Endothelial cell of umbilical vein (primary cell): ENCODE measurements at regions of chr3 and their contacts with region 1.

Region 1: DNA sequence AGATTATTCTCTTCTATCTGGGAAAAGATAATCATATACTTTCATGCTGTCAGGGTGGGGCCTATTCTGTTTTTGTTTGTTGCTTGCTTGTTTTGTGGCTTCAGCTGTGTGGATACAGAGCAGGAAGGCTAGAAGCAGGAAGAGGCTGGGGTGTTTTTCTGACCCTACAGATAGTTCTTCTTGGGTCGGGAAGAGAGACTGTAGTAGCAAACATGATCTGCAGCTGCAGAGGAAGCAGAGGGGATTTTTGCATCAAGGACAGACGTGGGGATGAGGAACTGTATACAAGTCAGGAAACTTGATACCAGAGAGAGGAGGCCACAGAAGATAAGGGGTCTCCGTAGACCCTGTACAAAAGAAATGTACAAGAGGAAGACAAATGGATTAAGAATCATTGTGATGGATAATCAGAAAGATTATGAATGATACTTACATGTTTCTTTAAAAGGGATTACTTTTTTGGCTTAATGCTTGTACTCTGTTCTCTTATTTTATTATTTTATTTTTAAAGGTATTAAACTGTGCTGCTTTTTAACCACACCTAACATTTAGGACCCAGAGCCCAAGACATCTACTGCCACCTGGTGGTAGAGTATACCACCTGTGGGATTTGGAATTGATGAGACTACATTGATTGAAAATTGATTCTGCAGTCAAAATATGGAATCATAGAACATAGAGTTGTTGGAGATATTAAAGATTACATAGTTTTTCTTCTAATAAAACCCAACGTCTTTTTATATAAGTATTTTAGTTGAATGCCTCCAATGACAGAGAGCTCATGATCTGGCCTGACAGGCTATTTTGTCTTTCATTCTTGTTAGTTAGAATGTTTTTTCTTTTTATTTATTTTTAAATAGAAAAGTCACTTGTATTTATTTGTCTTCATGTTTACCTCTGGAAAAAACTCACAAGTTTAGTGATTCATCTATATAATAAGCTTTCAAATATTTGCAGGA is 87.3 kb upstream of the ROPN1 start:
- DNase-seq: peak; percentile 34
- H3K4me3 ChIP-seq: no peak overlapping the region
- H3K27ac ChIP-seq: no peak overlapping the region
- H3K4me1 ChIP-seq: no peaks in the 10 kb centered on the region
- H3K27me3 ChIP-seq: peaks cover 0 to 4% of the 10 kb centered on the region in 2 experiments
- CTCF ChIP-seq: peak; percentile 29 to 58
- POLR2A ChIP-seq: no peak

Region 2: GRCh38 chr3:123941121-123941520 is 138.1 kb before region 1 on chr3:
- CTCF ChIA-PET with region 1: interaction called, 10 read pairs
- POLR2A ChIA-PET with region 1: no interaction called
- dilution Hi-C with region 1: no loop called
- intact Hi-C with region 1: no loop called
- DNase-seq: no peak
- H3K4me3 ChIP-seq: no peak overlapping the region
- H3K27ac ChIP-seq: no peak overlapping the region
- H3K4me1 ChIP-seq: no peaks in the 10 kb centered on the region
- H3K27me3 ChIP-seq: no peaks in the 10 kb centered on the region
- CTCF ChIP-seq: no peak
- POLR2A ChIP-seq: no peak

Region 3: DNA sequence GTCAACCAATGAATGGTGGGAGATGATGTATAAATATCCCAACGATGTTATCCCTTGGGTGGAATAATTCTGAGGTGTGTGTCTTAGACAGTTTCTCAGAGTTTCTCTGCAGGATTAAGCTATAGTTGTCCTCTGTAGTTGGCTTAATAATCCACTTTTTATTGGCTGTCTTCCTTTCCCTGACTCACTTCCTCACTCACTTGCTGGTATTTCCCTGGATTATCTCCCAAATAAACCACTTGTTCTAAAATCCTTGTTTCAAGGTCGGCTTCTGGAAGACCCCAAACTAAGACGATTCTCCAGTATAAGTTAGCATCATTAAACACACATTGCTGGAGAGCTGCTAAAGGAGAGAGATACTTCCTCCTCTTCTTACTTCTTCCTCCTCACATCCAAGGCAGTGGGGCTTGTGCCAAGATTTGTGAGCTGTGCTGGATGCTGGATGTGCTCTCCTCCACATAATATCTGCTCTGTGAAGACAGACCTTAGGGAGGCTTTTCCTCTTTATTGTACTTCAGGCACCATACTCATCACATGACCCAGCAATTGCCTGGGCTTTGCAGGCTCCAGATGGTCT is 64.8 kb before region 1 on chr3:
- CTCF ChIA-PET with region 1: interaction called, 48 read pairs
- POLR2A ChIA-PET with region 1: no interaction called
- dilution Hi-C with region 1: no loop called
- intact Hi-C with region 1: loop called (anchors 1 kb)
- DNase-seq: peak; percentile 23
- H3K4me3 ChIP-seq: no peak overlapping the region
- H3K27ac ChIP-seq: no peak overlapping the region
- H3K4me1 ChIP-seq: peaks cover 7% of the 10 kb centered on the region
- H3K27me3 ChIP-seq: peaks cover 0 to 5% of the 10 kb centered on the region in 2 experiments
- CTCF ChIP-seq: no peak
- POLR2A ChIP-seq: no peak

Region 4: DNA sequence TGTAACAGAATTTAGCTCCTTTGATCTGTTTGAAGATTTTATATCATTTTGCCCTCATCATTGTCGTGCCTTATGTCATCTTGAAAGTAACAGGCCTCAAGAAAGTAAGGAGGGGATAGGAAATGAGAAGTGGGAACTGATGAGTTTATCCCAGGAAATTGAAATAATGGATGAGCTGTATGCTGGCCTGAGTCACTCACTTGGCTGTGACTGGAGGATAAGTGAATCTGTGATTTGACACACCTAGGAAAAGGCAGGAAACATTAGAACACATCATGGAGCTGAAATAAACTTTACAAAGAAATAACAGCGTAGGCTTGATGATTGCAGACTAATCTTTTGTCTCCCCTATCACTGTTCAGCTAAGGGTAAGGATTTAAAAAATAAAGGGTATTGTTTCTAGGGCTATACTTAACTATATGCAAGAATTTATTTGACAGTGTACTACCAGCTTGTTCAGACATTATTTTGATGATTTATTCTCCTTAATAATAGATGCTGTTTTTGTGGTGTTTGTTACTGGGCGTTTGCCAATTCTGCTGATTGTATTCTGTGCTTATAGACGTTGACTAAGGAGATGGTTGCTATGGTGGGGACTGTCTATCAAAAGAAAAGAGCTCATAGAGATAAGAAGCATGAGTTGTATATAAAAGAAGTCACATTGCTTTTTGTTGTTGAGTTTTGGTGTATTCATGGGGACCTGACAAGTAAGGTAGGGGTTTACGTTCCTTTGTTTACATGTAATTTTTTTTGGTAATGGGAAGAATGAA is 18.3 kb after region 1 on chr3:
- CTCF ChIA-PET with region 1: interaction called, 14 read pairs
- POLR2A ChIA-PET with region 1: no interaction called
- dilution Hi-C with region 1: no loop called
- intact Hi-C with region 1: loop called (anchors 1 kb)
- DNase-seq: peak; percentile 34
- H3K4me3 ChIP-seq: no peak overlapping the region
- H3K27ac ChIP-seq: no peak overlapping the region
- H3K4me1 ChIP-seq: peaks cover 14% of the 10 kb centered on the region
- H3K27me3 ChIP-seq: no peaks in the 10 kb centered on the region
- CTCF ChIP-seq: no peak
- POLR2A ChIP-seq: no peak

Region 5: DNA sequence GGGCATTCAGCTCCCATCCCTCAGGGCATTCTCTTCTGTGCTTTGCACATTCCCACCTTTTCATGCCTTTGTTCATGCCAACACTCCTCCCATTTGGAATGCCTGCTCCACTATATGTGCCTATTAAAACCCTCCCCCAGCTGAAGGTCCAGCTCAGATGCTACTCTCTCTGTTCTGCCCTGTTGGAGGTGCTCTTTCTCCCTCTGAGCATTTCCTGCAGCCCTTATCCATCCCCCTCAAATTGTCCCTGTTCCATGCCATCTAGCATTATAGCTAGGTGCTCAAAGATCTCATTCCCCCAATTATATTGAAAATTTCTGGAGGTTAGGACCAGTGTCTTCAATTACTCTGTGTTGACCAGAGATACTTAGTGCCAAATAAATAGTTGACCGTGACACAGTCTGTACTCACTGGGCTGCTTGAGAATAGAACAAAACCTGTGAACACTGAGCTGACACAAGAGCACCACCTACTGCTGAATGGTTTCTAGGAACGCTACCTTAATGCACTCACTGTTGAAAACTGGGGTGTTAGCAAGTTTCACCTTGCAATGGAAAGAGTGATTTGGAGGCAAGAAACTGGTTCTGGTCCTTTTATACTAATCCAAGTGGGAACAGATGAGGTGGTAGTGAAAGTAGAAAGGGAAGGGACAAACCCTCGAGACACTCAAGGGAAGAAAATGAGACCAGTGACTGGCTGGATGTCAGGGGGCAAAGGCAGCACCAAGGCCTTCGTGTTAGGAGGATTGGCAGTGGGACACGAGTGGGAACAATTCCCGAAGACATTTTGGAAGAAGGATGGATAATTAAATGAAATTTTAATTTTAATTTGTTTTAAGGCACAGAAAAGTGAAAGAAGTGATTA is 202.5 kb after region 1 on chr3:
- CTCF ChIA-PET with region 1: interaction called, 39 read pairs
- POLR2A ChIA-PET with region 1: no interaction called
- dilution Hi-C with region 1: no loop called
- intact Hi-C with region 1: loop called (anchors 1 kb)
- DNase-seq: peak; percentile 54
- H3K4me3 ChIP-seq: no peak overlapping the region
- H3K27ac ChIP-seq: no peak overlapping the region
- H3K4me1 ChIP-seq: peaks cover 10% of the 10 kb centered on the region
- H3K27me3 ChIP-seq: peaks cover 0 to 2% of the 10 kb centered on the region in 2 experiments
- CTCF ChIP-seq: peak; percentile 46 to 55
- POLR2A ChIP-seq: no peak

Region 6: DNA sequence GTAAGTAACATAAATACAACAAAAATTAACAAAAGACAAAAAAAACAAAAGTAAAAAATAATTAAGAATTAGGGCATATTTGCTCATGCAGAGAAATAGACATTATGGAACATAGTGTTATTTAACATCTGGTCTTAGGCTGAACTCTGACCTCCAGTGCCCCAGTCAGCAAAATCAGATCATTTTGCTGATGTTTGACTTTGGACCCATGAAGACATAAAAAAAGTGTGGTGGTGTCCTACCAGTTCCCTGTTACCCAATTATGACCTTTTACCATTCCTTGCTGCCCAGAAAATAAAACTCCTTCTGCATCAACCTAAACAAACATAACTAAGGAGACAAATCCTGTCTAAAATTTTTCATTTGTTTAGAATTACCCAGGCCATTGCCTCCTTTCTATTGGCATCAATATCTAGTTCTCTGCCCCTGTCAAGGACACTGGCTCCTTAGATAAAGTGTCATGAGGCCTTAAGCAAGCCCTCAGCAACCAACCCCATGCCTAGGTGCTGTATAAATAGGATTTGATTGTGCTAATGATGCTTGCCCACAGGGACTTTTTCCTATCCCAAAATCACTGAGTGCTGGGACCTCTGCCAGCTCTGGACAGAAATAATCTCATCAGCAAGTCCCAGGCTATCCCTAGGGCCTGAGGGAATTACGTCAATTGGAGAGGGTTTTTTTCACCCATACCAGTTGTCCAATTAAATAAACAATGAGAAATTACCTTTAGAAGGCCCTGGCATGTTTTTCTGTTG is 316.5 kb after region 1 on chr3:
- CTCF ChIA-PET with region 1: no interaction called
- POLR2A ChIA-PET with region 1: no interaction called
- dilution Hi-C with region 1: no loop called
- intact Hi-C with region 1: no loop called
- DNase-seq: no peak
- H3K4me3 ChIP-seq: no peak overlapping the region
- H3K27ac ChIP-seq: no peak overlapping the region
- H3K4me1 ChIP-seq: peaks cover 3% of the 10 kb centered on the region
- H3K27me3 ChIP-seq: no peaks in the 10 kb centered on the region
- CTCF ChIP-seq: no peak
- POLR2A ChIP-seq: no peak

Region 7: DNA sequence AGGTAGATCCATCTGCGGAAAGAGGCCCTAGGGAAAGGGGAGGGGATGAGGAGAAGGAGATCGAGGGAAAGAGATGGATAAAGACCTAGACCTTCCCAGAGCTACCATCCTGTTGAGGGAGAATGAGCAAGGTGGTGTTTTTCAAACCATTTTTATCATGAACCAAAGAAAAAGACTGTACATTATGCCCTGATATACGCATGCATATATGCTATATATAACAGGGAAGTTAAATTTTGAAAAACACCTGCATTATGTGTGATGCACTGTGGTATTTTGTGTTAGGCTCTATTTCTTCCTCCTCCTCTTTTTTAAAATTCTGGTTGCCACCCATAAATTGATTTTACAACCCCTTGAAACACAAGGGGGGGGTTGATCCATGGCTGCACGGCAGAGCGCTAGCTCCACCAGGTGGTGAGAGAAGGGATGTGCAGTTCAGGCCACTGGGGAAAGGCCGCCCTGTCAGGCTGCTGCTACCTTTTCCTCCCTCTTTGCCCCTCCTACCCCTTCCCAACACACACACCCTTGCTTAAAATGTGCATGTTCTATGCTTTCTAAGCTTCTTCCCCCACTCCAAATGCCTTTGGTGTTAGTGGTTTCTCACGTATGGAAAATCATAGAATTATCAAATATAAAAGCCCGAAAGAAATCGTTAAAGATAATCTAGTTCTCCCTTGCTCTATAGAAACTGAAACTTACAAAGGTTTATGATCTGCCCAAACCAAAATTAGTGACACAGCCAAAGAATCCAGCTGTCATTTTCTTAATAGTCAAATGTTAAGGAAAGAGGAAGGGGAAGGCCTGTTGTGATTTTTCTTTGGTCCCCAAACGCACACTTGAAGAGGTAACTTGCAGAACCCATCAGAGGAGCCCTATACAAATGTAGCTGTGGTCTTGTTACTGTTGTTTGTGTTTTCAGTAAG is 389.0 kb after region 1 on chr3:
- CTCF ChIA-PET with region 1: no interaction called
- POLR2A ChIA-PET with region 1: no interaction called
- dilution Hi-C with region 1: no loop called
- intact Hi-C with region 1: loop called (anchors 5 kb)
- DNase-seq: peak; percentile 58
- H3K4me3 ChIP-seq: no peak overlapping the region
- H3K27ac ChIP-seq: no peak overlapping the region
- H3K4me1 ChIP-seq: no peaks in the 10 kb centered on the region
- H3K27me3 ChIP-seq: peaks cover 0 to 2% of the 10 kb centered on the region in 2 experiments
- CTCF ChIP-seq: peak; percentile 91 to 97
- POLR2A ChIP-seq: no peak

Region 8: DNA sequence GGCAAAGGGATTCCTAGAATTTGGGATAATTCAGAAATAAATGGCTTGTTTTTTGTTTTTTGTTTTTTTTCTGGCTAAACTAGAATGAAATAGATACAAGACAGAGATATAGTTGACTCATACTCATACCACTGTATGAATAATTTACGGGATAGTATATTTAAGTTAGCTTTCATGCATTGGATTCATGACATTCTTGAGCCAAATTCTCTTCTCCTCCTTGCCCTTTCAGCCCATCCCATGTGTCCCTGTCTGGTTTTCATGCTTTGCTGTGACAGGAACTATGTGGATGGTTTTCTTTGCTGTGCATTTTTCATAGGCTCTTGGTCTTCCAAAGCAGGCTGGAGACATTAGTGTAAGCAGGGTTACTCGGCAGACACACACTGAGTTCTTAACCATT is 584.5 kb after region 1 on chr3:
- CTCF ChIA-PET with region 1: no interaction called
- POLR2A ChIA-PET with region 1: no interaction called
- dilution Hi-C with region 1: no loop called
- intact Hi-C with region 1: no loop called
- DNase-seq: no peak
- H3K4me3 ChIP-seq: no peak overlapping the region
- H3K27ac ChIP-seq: no peak overlapping the region
- H3K4me1 ChIP-seq: no peaks in the 10 kb centered on the region
- H3K27me3 ChIP-seq: no peaks in the 10 kb centered on the region
- CTCF ChIP-seq: no peak
- POLR2A ChIP-seq: no peak